ENCODE measurements at regions of chr5 and their contacts with region 1.

Region 1: GRCh38 chr5:61933787-61934626 is 372.0 kb upstream of the KIF2A start:
- DNase-seq: peak in 3 of 5 donors; percentile 21 to 35 (median 25)
- ATAC-seq: peak in 3 of 4 donors; percentile 54 to 68 (median 66)
- H3K4me3 ChIP-seq: no peak overlapping the region
- H3K27ac ChIP-seq: no peak overlapping the region
- H3K4me1 ChIP-seq: peaks cover 0 to 2% (median 0%) of the 10 kb centered on the region in 12 donors
- H3K27me3 ChIP-seq: no peaks in the 10 kb centered on the region
- CTCF ChIP-seq: peak; percentile 43 to 72 (median 57)
- POLR2A ChIP-seq: no peak

Region 2: GRCh38 chr5:60677844-60678664 is 1256.0 kb before region 1 on chr5:
- intact Hi-C with region 1: loop called in 7 of 10 experiments (anchors 5 to 10 kb)
- DNase-seq: no peak
- ATAC-seq: no peak
- H3K4me3 ChIP-seq: no peak overlapping the region
- H3K27ac ChIP-seq: no peak overlapping the region
- H3K4me1 ChIP-seq: peaks cover 0 to 5% (median 0%) of the 10 kb centered on the region in 12 donors
- H3K27me3 ChIP-seq: no peaks in the 10 kb centered on the region
- CTCF ChIP-seq: peak in 11 of 12 donors; percentile 20 to 55 (median 46)
- POLR2A ChIP-seq: no peak

Region 3: DNA sequence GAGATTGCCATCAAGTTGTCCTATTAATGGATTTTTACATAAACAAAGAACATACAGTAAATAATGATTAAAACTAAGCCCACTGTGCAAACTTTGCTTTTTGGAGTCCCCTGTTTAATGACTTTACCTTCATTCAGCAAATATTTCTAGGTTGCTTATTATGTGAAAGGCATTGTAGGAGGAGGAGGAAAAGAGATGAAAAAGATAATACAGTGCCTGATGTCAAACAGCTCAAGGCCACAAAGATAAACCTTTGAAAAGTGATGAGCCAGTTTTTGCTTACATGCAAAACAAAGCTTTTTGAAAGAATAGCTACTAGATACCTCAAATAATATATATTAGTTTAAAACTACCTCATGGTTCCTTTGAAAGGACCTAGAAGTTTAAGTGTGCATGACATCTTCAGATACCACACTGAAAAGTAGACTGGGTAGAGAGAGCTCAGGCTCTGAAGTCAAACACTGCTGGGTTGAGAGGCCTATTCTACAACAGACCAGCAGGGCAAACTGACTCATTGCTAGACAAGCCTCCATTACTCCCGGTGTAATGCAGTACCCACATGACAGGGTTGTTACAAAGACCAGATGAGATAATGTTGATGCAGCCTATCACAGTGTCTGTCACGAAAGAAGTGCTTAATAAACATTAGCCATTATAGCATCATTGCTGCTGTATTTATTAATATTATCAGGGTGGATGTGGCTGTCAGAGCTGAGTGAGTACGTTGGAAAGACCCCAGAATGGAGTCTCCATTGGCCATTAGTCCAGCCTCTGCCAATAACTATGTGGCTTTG is 1245.9 kb before region 1 on chr5:
- intact Hi-C with region 1: loop called in 1 of 10 experiments (anchors 10 kb)
- DNase-seq: no peak
- ATAC-seq: no peak
- H3K4me3 ChIP-seq: no peak overlapping the region
- H3K27ac ChIP-seq: no peak overlapping the region
- H3K4me1 ChIP-seq: no peaks in the 10 kb centered on the region
- H3K27me3 ChIP-seq: no peaks in the 10 kb centered on the region
- CTCF ChIP-seq: no peak
- POLR2A ChIP-seq: no peak

Region 4: GRCh38 chr5:60960591-60960990 is 973.4 kb before region 1 on chr5:
- intact Hi-C with region 1: loop called in 5 of 10 experiments (anchors 5 to 10 kb)
- DNase-seq: no peak
- ATAC-seq: no peak
- H3K4me3 ChIP-seq: no peak overlapping the region
- H3K27ac ChIP-seq: no peak overlapping the region
- H3K4me1 ChIP-seq: peaks cover 0 to 14% (median 0%) of the 10 kb centered on the region in 12 donors
- H3K27me3 ChIP-seq: no peaks in the 10 kb centered on the region
- CTCF ChIP-seq: peak in 10 of 12 donors; percentile 19 to 55 (median 38)
- POLR2A ChIP-seq: no peak

Region 5: GRCh38 chr5:61055434-61056006 is 878.5 kb before region 1 on chr5:
- intact Hi-C with region 1: loop called in 4 of 10 experiments (anchors 5 to 10 kb)
- DNase-seq: no peak
- ATAC-seq: no peak
- H3K4me3 ChIP-seq: no peak overlapping the region
- H3K27ac ChIP-seq: no peak overlapping the region
- H3K4me1 ChIP-seq: peaks cover 0 to 3% (median 0%) of the 10 kb centered on the region in 12 donors
- H3K27me3 ChIP-seq: no peaks in the 10 kb centered on the region
- CTCF ChIP-seq: peak; percentile 36 to 69 (median 58)
- POLR2A ChIP-seq: no peak

Region 6: GRCh38 chr5:61069150-61069549 is 864.9 kb before region 1 on chr5:
- intact Hi-C with region 1: loop called in 1 of 10 experiments (anchors 10 kb)
- DNase-seq: no peak
- ATAC-seq: no peak
- H3K4me3 ChIP-seq: no peak overlapping the region
- H3K27ac ChIP-seq: no peak overlapping the region
- H3K4me1 ChIP-seq: peaks cover 0 to 4% (median 0%) of the 10 kb centered on the region in 12 donors
- H3K27me3 ChIP-seq: no peaks in the 10 kb centered on the region
- CTCF ChIP-seq: no peak
- POLR2A ChIP-seq: no peak